Ascending aorta (tissue), 2 donors: ENCODE measurements at regions of chr22 and their contacts with region 1.

Region 1: GRCh38 chr22:20393909-20394691 is at the start of gene ZNF74:
- DNase-seq: peak; percentile 62 to 93
- H3K4me3 ChIP-seq: peak within 1 kb of the TSS; percentile 84 to 98
- H3K27ac ChIP-seq: peak within 1 kb of the TSS; percentile 61 to 81
- H3K4me1 ChIP-seq: peaks cover 4 to 18% of the 10 kb centered on the region in 2 donors
- H3K27me3 ChIP-seq: no peaks in the 10 kb centered on the region
- CTCF ChIP-seq: peak in 1 of 3 experiments; percentile 12
- total RNA-seq, gene ZNF74: 28.9 TPM

Region 2: DNA sequence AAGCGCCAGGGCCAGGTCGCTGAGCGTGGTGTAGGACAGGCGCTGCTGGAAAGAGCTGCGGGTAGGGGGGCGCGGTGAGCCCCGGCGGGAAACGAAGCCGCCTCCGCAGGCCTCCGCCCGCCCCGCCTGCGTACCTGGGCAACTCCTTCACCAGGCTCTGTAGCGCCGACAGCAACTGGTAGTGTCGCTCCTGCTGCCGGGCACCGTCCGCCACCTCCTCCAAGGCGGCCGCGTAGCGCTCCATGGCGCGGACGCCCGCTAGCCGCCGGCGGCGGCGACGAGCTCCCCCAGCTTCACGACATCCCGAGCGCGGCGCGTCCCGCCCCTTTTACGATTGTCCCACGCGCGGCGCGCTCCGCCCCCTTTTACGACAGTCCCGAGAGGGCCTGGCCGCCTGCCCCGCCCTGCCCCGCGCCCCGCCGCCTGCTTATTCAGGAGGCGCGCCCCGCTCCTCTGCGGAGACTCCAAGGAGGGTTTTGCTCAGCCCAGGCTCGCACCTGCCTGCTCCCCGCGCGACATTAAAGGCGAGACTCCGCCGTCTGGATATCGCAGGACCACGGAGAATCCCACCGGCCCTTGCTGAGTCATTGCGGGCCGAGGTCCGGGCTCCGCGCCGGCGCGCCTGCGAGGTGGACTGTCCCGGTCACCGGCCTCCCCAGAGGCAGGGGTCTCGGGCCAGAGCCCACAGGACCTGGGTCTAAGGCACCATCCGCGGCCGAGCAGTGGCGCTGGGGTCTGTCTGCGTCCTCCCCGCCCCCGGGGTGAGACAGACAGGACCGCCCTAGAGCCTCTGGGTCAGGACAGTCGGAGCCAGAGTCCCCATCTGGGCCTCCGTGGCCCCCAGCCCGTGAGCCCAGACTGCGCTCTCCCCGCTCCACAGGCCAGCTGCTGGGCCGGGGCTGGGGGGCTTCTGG is 74.1 kb before region 1 on chr22 and contains the start of gene DGCR6L:
- intact Hi-C with region 1: loop called (anchors 1 kb)
- DNase-seq: peak; percentile 82 to 97
- H3K4me3 ChIP-seq: peak within 1 kb of the TSS; percentile 79 to 100
- H3K27ac ChIP-seq: peak within 1 kb of the TSS; percentile 80 to 91
- H3K4me1 ChIP-seq: peaks cover 0 to 26% of the 10 kb centered on the region in 2 donors
- H3K27me3 ChIP-seq: no peaks in the 10 kb centered on the region
- CTCF ChIP-seq: no peak
- total RNA-seq, gene DGCR6L: 42.1 TPM

Region 3: GRCh38 chr22:20405931-20406685 is 12.0 kb after region 1 on chr22:
- intact Hi-C with region 1: no loop called
- DNase-seq: peak in 1 of 2 donors; percentile 46
- H3K4me3 ChIP-seq: no peak overlapping the region
- H3K27ac ChIP-seq: no peak overlapping the region
- H3K4me1 ChIP-seq: no peaks in the 10 kb centered on the region
- H3K27me3 ChIP-seq: no peaks in the 10 kb centered on the region
- CTCF ChIP-seq: no peak